Motor neuron (in vitro differentiated cells): ENCODE measurements at regions of chr22 and their contacts with region 1.

Region 1: GRCh38 chr22:50030297-50031188 is 18.0 kb upstream of the IL17REL start:
- ATAC-seq: peak; percentile 92 to 98 (median 98)
- H3K4me3 ChIP-seq: peak overlapping the region; percentile 7 to 32 (median 21)
- H3K27ac ChIP-seq: no peak overlapping the region
- H3K4me1 ChIP-seq: no peaks in the 10 kb centered on the region

Region 2: DNA sequence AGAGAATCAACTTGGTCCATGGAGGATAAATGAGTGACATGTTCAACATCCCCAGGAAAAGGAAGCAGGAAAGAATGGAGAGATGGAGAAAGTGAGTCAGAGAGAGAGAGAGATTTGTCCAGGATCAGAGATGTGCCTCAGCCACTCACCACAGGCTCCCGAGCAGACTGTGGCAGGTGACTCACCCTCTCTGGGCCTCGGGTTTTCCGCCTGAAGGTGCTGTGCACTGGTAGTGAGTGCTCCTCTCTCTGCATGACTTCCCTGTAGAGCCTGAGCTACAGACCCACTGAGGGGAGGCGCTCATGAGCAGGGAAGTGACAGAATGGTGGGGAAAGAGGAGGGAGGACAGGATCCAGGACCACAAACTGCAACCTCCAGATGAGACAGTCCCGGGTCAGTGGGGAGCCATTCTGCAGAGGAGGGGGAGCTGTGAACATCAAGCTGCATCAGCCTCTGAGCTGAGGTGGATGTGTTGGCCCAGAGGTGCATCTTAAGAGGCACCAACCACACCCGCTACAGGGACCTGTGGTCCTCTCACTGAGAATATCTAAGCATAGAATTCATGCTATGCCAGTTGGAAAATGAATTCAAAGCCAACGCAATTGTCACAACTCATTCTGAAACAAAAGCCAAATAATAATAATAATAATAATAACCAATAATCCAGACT is 636.3 kb before region 1 on chr22:
- in situ Hi-C with region 1: no loop called
- ATAC-seq: no peak
- H3K4me3 ChIP-seq: no peak overlapping the region
- H3K27ac ChIP-seq: no peak overlapping the region
- H3K4me1 ChIP-seq: no peaks in the 10 kb centered on the region

Region 3: DNA sequence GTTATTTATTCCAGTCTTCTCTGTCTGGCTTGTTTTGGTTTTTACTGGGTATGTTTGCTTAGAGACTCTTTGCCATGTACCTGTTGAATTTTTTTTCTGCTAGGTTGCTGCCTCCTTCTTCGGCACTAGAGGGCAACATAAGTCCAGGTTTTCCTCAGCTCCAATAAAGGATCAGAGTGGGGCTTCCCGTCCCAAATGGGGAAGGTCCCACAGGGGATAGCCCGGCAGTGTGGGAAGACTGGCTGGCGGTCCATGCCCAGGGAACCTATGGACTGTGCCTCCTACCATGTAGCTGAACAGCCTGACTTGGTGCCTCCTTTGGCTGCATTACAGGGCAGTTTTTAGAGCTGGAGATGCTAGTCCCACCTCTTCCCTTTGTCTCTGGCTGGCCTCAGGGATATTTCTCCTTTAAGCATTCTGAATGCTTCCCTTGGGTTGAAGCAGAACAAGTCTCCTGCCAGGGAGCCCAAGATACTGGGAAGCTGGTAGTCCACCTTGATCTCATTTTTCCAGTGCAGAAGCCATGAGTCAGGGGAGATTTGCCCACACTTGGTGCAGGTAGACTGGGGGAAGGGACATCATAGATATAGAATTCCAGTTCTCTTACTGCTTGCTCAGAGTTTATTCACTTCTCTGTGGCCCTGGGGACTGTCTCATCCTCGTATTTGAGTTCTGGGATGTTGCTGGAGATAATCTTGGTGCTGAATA is 263.0 kb before region 1 on chr22:
- in situ Hi-C with region 1: loop called in 1 of 9 experiments (anchors 25 kb)
- ATAC-seq: peak; percentile 18 to 57 (median 26)
- H3K4me3 ChIP-seq: no peak overlapping the region
- H3K27ac ChIP-seq: no peak overlapping the region
- H3K4me1 ChIP-seq: peaks cover 0 to 2% of the 10 kb centered on the region in 2 donors

Region 4: GRCh38 chr22:49892226-49892899 is 138.2 kb before region 1 on chr22:
- in situ Hi-C with region 1: no loop called
- ATAC-seq: no peak
- H3K4me3 ChIP-seq: no peak overlapping the region
- H3K27ac ChIP-seq: no peak overlapping the region
- H3K4me1 ChIP-seq: no peaks in the 10 kb centered on the region

Region 5: GRCh38 chr22:49930739-49931412 is 99.7 kb before region 1 on chr22:
- in situ Hi-C with region 1: loop called (anchors 5 to 25 kb)
- ATAC-seq: peak; percentile 8 to 58 (median 28)
- H3K4me3 ChIP-seq: no peak overlapping the region
- H3K27ac ChIP-seq: no peak overlapping the region
- H3K4me1 ChIP-seq: peaks cover 29 to 36% of the 10 kb centered on the region in 2 donors

Region 6: DNA sequence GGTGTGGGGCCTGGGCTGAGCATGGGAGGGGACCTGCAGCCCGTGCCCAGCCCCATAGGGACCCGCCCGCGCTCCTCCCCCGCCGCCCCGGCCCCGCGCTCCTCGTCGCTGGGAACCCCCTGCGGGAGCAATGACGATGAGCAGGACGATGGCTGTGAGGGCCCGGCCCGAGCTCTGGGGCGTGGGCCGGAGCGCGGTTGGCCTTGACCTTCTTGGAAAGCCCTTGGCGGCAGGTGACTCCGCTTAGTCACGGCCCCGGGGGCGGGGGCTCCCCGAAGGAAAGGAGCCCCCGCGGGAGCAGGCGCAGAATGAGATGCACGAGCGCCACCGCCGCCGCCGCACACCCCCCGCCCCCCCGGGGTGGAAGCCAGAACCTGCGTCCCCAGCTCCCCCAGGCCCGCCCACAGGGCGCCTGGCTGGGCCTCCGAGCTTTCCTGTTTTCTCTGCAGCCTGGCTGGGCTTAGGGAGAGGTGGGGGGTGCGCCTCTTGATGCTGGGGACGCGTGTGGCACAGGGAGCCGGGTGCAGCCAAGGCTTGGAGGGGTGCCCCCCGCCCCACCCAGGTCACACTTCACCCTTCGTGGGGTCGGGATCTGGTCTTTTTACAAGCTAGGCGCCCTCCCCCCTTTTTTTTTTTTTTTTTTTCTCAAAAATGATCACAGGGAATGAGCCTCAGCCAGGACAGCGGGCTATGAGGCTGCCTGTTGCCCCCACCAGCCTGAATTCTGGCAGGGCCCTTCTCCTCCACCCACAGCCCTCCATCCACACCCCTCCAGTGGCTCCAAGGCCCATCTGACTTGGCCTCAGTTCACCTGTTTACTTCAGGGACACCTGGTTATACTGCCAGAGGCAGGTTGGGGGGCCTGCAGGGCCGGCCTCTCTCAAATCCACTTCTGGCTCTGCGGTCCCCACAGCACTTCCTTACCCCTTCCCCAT is 94.3 kb before region 1 on chr22:
- in situ Hi-C with region 1: loop called in 7 of 9 experiments (anchors 5 to 25 kb)
- ATAC-seq: peak; percentile 76 to 87 (median 80)
- H3K4me3 ChIP-seq: peak overlapping the region in 4 of 5 donors; percentile 2 to 11 (median 8)
- H3K27ac ChIP-seq: peak overlapping the region; percentile 62 to 75
- H3K4me1 ChIP-seq: peaks cover 45% of the 10 kb centered on the region in 2 donors

Region 7: DNA sequence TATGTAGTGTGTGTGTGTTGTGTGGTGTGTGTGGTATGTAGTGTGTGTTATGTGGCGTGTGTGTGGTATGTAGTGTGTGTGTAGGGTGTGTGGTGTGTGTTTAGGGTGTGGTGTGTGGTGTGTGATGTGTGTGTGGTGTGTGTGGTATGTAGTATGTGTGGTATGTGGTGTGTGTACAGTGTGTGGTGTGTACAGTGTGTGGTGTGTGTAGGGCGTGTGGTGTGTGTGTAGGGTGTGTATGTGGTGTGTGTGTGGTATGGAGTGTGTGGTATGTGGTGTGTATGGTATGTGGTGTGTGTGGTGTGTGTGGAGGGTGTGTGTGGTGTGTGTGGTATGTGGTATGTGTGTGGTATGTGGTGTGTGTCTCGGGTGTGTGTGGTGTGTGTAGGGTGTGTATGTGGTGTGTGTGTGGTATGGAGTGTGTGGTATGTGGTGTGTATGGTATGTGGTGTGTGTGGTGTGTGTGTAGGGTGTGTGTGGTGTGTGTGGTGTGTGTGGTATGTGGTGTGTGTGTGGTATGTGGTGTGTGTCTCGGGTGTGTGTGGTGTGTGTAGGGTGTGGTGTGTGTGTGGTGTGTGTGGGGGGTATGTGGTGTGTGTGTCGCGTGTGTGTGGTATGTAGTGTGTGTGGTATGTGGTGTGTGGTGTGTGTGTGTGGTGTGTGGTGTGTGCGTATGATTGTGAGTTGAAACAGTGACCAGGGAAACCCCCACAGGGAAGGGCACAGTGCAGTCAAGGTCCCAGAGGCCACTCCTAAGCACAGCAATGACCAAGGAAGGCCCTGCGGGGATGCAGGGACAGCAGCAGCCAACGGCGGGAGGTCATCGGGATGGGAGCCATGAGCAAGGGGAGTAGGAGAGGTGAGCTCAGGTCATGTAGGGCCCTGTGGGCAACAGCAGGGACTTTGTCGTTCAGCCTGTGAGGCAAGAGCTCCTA is 309.7 kb after region 1 on chr22:
- in situ Hi-C with region 1: no loop called
- ATAC-seq: no peak
- H3K4me3 ChIP-seq: no peak overlapping the region
- H3K27ac ChIP-seq: no peak overlapping the region
- H3K4me1 ChIP-seq: peaks cover 0 to 3% of the 10 kb centered on the region in 2 donors